PC-3 (cell line): ENCODE measurements at regions of chr6 and their contacts with region 1.

Region 1: GRCh38 chr6:134822920-134823709 is 126.8 kb downstream of the ALDH8A1 start:
- DNase-seq: peak; percentile 88
- ATAC-seq: peak; percentile 95
- H3K4me3 ChIP-seq: no peak overlapping the region
- H3K27ac ChIP-seq: no peak overlapping the region
- H3K4me1 ChIP-seq: no peaks in the 10 kb centered on the region; the same call in 1 of the 2 replicates
- H3K27me3 ChIP-seq: no peaks in the 10 kb centered on the region
- CTCF ChIP-seq: peak; percentile 79

Region 2: DNA sequence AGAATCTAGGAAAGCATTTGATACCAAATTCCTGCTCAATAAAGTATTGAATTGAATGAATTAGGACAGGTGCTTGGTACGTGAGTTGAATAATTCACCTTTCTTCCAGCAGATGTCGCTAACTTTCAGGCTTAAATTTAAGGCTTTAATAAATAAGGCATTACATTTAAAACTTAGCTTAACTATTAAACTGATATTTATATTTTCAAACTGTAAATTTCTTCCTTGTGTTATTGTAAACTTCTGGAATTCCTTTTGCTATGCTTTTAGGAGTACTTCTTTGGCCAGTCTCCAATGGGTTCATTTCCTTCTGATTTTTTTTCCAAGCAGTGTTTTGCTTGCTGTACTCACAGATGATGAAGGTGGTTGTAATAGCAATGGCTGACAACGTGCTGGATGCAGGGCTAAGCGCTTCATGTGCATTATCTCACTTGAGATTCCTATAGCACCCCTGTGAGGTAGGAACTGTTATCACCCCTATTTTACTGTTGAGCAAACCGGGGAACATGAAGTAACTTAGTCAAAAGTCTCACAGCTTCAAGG is 699.4 kb before region 1 on chr6:
- CTCF ChIA-PET with region 1: interaction called, 5 read pairs
- POLR2A ChIA-PET with region 1: no interaction called
- intact Hi-C with region 1: loop called (anchors 1 kb)
- DNase-seq: peak; percentile 74
- ATAC-seq: peak; percentile 66
- H3K4me3 ChIP-seq: no peak overlapping the region
- H3K27ac ChIP-seq: no peak overlapping the region
- H3K4me1 ChIP-seq: no peaks in the 10 kb centered on the region
- H3K27me3 ChIP-seq: no peaks in the 10 kb centered on the region
- CTCF ChIP-seq: peak; percentile 70

Region 3: GRCh38 chr6:134402372-134402984 is 420.6 kb before region 1 on chr6:
- CTCF ChIA-PET with region 1: no interaction called
- POLR2A ChIA-PET with region 1: no interaction called
- intact Hi-C with region 1: no loop called
- DNase-seq: no peak
- ATAC-seq: no peak
- H3K4me3 ChIP-seq: no peak overlapping the region
- H3K27ac ChIP-seq: no peak overlapping the region
- H3K4me1 ChIP-seq: peaks cover 35% of the 10 kb centered on the region
- H3K27me3 ChIP-seq: no peaks in the 10 kb centered on the region
- CTCF ChIP-seq: no peak

Region 4: GRCh38 chr6:134640975-134641429 is 182.1 kb before region 1 on chr6:
- CTCF ChIA-PET with region 1: interaction called, 3 read pairs
- POLR2A ChIA-PET with region 1: no interaction called
- intact Hi-C with region 1: loop called (anchors 5 kb)
- DNase-seq: peak; percentile 86
- ATAC-seq: peak; percentile 70
- H3K4me3 ChIP-seq: no peak overlapping the region
- H3K27ac ChIP-seq: no peak overlapping the region
- H3K4me1 ChIP-seq: peaks cover 22% of the 10 kb centered on the region
- H3K27me3 ChIP-seq: no peaks in the 10 kb centered on the region
- CTCF ChIP-seq: peak; percentile 86

Region 5: GRCh38 chr6:134938896-134939295 is 115.8 kb after region 1 on chr6:
- CTCF ChIA-PET with region 1: interaction called, 5 read pairs
- POLR2A ChIA-PET with region 1: no interaction called
- intact Hi-C with region 1: loop called (anchors 5 kb)
- DNase-seq: no peak
- ATAC-seq: no peak
- H3K4me3 ChIP-seq: no peak overlapping the region
- H3K27ac ChIP-seq: no peak overlapping the region
- H3K4me1 ChIP-seq: peaks cover 8% of the 10 kb centered on the region
- H3K27me3 ChIP-seq: no peaks in the 10 kb centered on the region
- CTCF ChIP-seq: no peak